Gastrocnemius medialis (tissue), 4 donors: ENCODE measurements at regions of chr14 and their contacts with region 1.

Region 1: GRCh38 chr14:76473481-76474263 is 97.7 kb downstream of the ESRRB start:
- DNase-seq: peak; percentile 51 to 84
- ATAC-seq: peak; percentile 93 to 94
- H3K4me3 ChIP-seq: peak overlapping the region; percentile 30 to 45 (median 38)
- H3K27ac ChIP-seq: peak overlapping the region; percentile 64 to 80 (median 77)
- H3K4me1 ChIP-seq: peaks cover 36 to 43% of the 10 kb centered on the region in 2 donors
- H3K27me3 ChIP-seq: no peaks in the 10 kb centered on the region
- CTCF ChIP-seq: peak in 1 of 5 experiments; percentile 11
- POLR2A ChIP-seq: no peak

Region 2: DNA sequence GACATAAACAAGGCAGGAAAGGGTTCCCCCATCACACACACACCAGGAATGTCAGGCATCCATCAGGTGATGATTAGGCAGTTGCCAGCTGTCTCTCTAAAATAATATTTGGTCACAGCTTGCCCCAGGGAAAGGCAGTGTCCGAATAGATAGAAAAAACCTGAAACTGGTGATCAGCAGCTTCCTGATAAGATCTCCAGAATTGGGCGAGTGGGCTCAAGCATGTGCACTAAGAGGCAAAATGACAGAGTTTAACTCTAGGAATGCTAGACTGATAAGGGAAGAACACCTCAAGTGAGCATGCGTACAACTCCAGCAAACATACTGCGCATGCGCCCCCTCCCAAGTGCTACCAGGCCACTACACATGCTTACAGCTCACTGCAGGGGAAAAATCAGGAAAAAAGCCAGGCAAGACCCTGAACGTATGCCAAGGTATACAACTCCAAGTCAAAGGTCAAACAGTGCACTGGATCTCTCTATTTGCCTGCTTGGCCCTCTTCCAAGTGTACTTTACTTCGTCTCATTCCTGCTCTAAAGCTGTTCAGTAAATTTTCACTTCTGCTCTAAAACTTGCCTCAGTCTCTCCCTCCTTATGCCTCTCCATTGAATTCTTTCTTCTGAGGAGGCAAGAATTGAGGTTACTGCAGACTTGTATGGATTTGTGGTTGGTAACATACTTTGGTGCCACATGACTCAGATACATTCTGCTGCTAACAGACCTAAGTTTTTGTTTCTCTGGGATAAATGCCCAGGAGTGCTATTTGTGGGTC is 214.1 kb after region 1 on chr14:
- in situ Hi-C with region 1: no loop called
- intact Hi-C with region 1: no loop called
- DNase-seq: no peak
- ATAC-seq: no peak
- H3K4me3 ChIP-seq: no peak overlapping the region
- H3K27ac ChIP-seq: no peak overlapping the region
- H3K4me1 ChIP-seq: no peaks in the 10 kb centered on the region
- H3K27me3 ChIP-seq: no peaks in the 10 kb centered on the region
- CTCF ChIP-seq: no peak
- POLR2A ChIP-seq: no peak

Region 3: DNA sequence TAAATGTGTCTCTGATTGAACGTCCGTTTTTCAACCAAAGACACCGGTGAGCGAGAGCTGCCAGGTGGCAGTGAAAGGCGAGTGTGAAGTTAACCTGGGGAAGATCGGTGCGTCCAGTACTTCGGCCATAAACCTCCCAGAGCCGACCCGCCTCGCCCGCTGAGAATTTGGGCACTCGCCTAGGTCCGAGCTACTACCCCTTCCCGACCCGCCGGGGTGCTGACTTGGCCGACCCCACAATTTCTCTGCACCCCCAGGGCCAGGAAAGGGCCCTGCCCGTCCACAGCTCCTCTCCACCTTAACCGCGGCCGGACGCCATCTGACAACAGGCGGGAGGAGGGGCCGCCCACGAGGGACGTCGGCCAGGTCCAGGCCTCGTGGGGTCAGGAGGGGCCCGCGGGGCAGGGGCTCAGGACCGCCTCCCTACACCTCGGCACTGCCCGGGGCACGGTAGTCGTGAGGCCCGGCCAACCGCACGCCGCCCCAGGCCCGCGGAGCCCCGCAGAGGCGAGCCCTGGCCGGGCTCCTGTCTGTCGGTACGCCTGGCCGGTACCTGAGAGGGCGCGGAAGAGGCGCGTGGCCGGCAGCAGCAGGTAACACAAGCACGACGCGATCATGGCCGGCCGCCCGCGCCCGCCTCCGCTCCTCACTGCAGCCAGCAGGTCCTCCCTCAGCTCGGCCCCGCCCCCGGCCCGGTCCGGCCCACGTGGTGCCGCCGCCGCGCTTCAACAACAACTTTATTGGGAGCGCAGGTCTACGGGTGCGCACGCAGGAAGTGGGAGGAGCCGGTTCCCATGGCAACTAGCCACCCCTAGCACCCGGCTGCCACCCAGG is 338.8 kb after region 1 on chr14 and contains the start of gene ANGEL1:
- in situ Hi-C with region 1: no loop called
- intact Hi-C with region 1: loop called (anchors 10 kb)
- DNase-seq: peak; percentile 92 to 97
- ATAC-seq: peak; percentile 91
- H3K4me3 ChIP-seq: peak within 1 kb of the TSS; percentile 71 to 91 (median 86)
- H3K27ac ChIP-seq: peak within 1 kb of the TSS; percentile 86 to 92 (median 90)
- H3K4me1 ChIP-seq: peaks cover 8 to 16% of the 10 kb centered on the region in 2 donors
- H3K27me3 ChIP-seq: no peaks in the 10 kb centered on the region
- CTCF ChIP-seq: peak in 2 of 5 experiments; percentile 16 to 38
- POLR2A ChIP-seq: peak; percentile 83 to 94
- total RNA-seq, gene ANGEL1: 8.6 to 16.9 (median 12.7) TPM